B cell (primary cell): ENCODE measurements at regions of chr5 and their contacts with region 1.

Region 1: GRCh38 chr5:103139264-103139865 is 19.3 kb downstream of the PPIP5K2 start:
- DNase-seq: peak; percentile 82
- ATAC-seq: peak; percentile 87
- H3K4me3 ChIP-seq: no peak overlapping the region
- H3K4me3 Mint-ChIP-seq: no peak overlapping the region
- H3K27ac ChIP-seq: no peak overlapping the region
- H3K27ac Mint-ChIP-seq: no peak overlapping the region
- H3K4me1 ChIP-seq: no peaks in the 10 kb centered on the region
- H3K4me1 Mint-ChIP-seq: no peaks in the 10 kb centered on the region
- H3K27me3 ChIP-seq: no peaks in the 10 kb centered on the region
- H3K27me3 Mint-ChIP-seq: no peaks in the 10 kb centered on the region
- CTCF ChIP-seq: peak; percentile 98

Region 2: GRCh38 chr5:102536323-102536928 is 602.9 kb before region 1 on chr5:
- CTCF ChIA-PET with region 1: interaction called, 20 read pairs
- POLR2A ChIA-PET with region 1: no interaction called
- intact Hi-C with region 1: loop called (anchors 1 kb)
- DNase-seq: no peak
- ATAC-seq: no peak
- H3K4me3 ChIP-seq: no peak overlapping the region
- H3K4me3 Mint-ChIP-seq: no peak overlapping the region
- H3K27ac ChIP-seq: no peak overlapping the region
- H3K27ac Mint-ChIP-seq: no peak overlapping the region
- H3K4me1 ChIP-seq: peaks cover 0 to 4% of the 10 kb centered on the region in 2 donors
- H3K4me1 Mint-ChIP-seq: peaks cover 4% of the 10 kb centered on the region
- H3K27me3 ChIP-seq: no peaks in the 10 kb centered on the region
- H3K27me3 Mint-ChIP-seq: peaks cover 4% of the 10 kb centered on the region
- CTCF ChIP-seq: peak; percentile 63

Region 3: DNA sequence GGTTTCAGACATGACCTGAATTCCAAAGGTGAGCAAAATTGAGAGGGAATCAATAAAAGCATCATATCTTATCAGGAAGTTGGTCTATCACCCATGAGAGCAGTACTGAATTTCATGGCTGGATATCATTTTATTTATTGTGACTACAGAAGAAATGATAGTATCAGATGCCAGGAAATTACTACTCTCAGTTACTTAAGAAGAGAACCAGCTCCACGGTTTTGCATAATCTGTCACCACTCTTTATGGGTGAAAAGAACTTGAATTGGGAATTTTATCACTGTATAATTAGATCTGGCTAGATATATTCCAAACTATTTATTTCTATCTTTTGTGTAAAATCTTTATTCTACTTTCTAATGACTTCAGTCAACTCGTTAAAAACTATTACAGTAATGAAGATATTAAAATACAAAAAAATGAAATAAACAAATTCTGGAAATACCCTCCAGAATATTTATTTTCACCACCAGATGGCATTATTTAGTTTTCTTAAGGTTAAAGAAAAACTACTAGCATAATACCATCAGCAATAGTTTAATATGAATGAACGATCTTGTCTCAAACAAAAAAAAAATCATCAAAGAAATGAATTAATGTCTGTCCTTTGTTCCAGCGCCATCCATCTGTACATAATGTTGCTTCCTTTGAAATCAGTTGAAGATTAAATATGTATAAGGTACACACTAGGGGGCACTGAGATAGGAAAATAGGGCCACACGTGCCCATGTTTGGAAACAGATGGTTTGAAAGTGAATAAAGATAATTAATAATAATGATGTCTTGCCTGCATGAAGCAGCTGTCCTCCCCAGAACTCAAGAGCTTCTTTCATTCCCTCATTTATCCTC is 555.9 kb before region 1 on chr5:
- CTCF ChIA-PET with region 1: interaction called, 19 read pairs
- POLR2A ChIA-PET with region 1: no interaction called
- intact Hi-C with region 1: no loop called
- DNase-seq: peak; percentile 18
- ATAC-seq: no peak
- H3K4me3 ChIP-seq: no peak overlapping the region
- H3K4me3 Mint-ChIP-seq: no peak overlapping the region
- H3K27ac ChIP-seq: no peak overlapping the region
- H3K27ac Mint-ChIP-seq: no peak overlapping the region
- H3K4me1 ChIP-seq: no peaks in the 10 kb centered on the region
- H3K4me1 Mint-ChIP-seq: no peaks in the 10 kb centered on the region
- H3K27me3 ChIP-seq: no peaks in the 10 kb centered on the region
- H3K27me3 Mint-ChIP-seq: peaks cover 3% of the 10 kb centered on the region
- CTCF ChIP-seq: peak; percentile 65

Region 4: GRCh38 chr5:102681407-102681983 is 457.9 kb before region 1 on chr5:
- CTCF ChIA-PET with region 1: interaction called, 28 read pairs
- POLR2A ChIA-PET with region 1: no interaction called
- intact Hi-C with region 1: loop called (anchors 1 kb)
- DNase-seq: peak; percentile 28
- ATAC-seq: peak; percentile 47
- H3K4me3 ChIP-seq: no peak overlapping the region
- H3K4me3 Mint-ChIP-seq: no peak overlapping the region
- H3K27ac ChIP-seq: no peak overlapping the region
- H3K27ac Mint-ChIP-seq: no peak overlapping the region
- H3K4me1 ChIP-seq: no peaks in the 10 kb centered on the region
- H3K4me1 Mint-ChIP-seq: no peaks in the 10 kb centered on the region
- H3K27me3 ChIP-seq: peaks cover 0 to 2% (median 0%) of the 10 kb centered on the region in 4 experiments
- H3K27me3 Mint-ChIP-seq: no peaks in the 10 kb centered on the region
- CTCF ChIP-seq: peak; percentile 64

Region 5: DNA sequence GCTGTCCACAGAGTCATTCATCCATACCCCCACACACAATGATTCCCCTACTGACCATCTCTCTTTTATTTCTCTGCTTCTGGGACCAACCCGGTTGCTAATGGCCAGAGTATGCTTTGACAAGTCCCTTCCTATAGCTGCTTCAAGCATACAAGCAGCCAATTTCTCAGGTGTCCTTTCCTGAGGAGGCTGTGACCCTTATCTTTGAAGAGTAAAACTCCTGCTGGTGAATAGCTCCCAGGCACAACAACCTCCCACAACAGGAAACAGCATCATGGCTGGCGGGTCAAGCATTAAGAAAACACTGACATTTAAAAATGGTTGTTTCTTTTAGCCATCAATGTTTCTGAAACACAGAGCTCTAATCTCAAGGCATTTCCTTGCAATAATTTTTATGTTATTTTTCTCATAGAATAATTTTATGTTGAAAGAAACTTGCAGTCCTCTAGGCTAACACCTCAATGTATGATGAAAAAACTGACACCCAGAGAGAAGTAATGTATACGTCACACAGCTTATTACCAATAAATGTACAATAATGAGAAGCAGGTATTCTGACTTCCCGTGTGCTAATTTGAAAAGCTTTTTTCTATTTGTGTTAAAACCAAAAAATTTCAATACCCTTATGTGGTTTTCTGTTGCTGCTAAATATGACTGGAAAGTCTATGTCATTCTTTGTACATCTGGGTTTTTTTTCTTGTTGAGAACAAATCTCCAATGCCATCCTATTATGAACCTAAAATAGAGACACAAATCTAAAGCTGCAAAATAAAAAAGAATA is 391.8 kb before region 1 on chr5:
- CTCF ChIA-PET with region 1: no interaction called
- POLR2A ChIA-PET with region 1: no interaction called
- intact Hi-C with region 1: no loop called
- DNase-seq: no peak
- ATAC-seq: no peak
- H3K4me3 ChIP-seq: no peak overlapping the region
- H3K4me3 Mint-ChIP-seq: no peak overlapping the region
- H3K27ac ChIP-seq: no peak overlapping the region
- H3K27ac Mint-ChIP-seq: no peak overlapping the region
- H3K4me1 ChIP-seq: no peaks in the 10 kb centered on the region
- H3K4me1 Mint-ChIP-seq: peaks cover 3% of the 10 kb centered on the region
- H3K27me3 ChIP-seq: peaks cover 0 to 6% (median 2%) of the 10 kb centered on the region in 4 experiments
- H3K27me3 Mint-ChIP-seq: peaks cover 15% of the 10 kb centered on the region
- CTCF ChIP-seq: no peak

Region 6: GRCh38 chr5:102778478-102778877 is 360.9 kb before region 1 on chr5:
- CTCF ChIA-PET with region 1: interaction called, 37 read pairs
- POLR2A ChIA-PET with region 1: no interaction called
- intact Hi-C with region 1: loop called (anchors 1 kb)
- DNase-seq: no peak
- ATAC-seq: no peak
- H3K4me3 ChIP-seq: no peak overlapping the region
- H3K4me3 Mint-ChIP-seq: no peak overlapping the region
- H3K27ac ChIP-seq: no peak overlapping the region
- H3K27ac Mint-ChIP-seq: no peak overlapping the region
- H3K4me1 ChIP-seq: no peaks in the 10 kb centered on the region
- H3K4me1 Mint-ChIP-seq: peaks cover 3% of the 10 kb centered on the region
- H3K27me3 ChIP-seq: no peaks in the 10 kb centered on the region
- H3K27me3 Mint-ChIP-seq: no peaks in the 10 kb centered on the region
- CTCF ChIP-seq: no peak

Region 7: DNA sequence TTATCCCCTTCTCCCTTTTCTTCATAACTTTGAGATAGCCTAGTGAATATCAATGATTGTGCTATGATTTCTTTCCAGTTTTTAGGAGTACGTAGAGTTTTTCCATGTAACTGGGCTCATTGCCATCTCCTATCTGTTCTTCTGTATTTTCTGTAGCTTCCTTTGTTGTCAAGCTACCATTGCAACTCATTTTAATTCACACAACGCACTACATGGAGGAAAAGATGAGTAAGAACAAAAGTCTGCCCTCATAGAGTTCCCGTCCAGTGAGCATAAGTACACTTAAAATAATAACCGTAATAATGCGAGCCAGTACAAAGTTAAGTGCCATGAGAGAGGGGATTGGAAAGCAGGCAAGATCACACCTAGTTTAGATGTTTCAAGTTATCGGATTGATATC is 206.6 kb before region 1 on chr5:
- CTCF ChIA-PET with region 1: no interaction called
- POLR2A ChIA-PET with region 1: no interaction called
- intact Hi-C with region 1: no loop called
- DNase-seq: no peak
- ATAC-seq: no peak
- H3K4me3 ChIP-seq: no peak overlapping the region
- H3K4me3 Mint-ChIP-seq: no peak overlapping the region
- H3K27ac ChIP-seq: no peak overlapping the region
- H3K27ac Mint-ChIP-seq: no peak overlapping the region
- H3K4me1 ChIP-seq: no peaks in the 10 kb centered on the region
- H3K4me1 Mint-ChIP-seq: no peaks in the 10 kb centered on the region
- H3K27me3 ChIP-seq: no peaks in the 10 kb centered on the region
- H3K27me3 Mint-ChIP-seq: no peaks in the 10 kb centered on the region
- CTCF ChIP-seq: no peak

Region 8: GRCh38 chr5:103119765-103120606 is 19.4 kb before region 1 on chr5 and contains the starts of genes GIN1 and PPIP5K2:
- CTCF ChIA-PET with region 1: interaction called, 15 read pairs
- POLR2A ChIA-PET with region 1: no interaction called
- intact Hi-C with region 1: no loop called
- DNase-seq: peak; percentile 98
- ATAC-seq: peak; percentile 91
- H3K4me3 ChIP-seq: peak within 1 kb of the TSS; percentile 77 to 96 (median 91)
- H3K4me3 Mint-ChIP-seq: peak within 1 kb of the TSS; percentile 93
- H3K27ac ChIP-seq: peak within 1 kb of the TSS; percentile 92 to 96
- H3K27ac Mint-ChIP-seq: peak within 1 kb of the TSS; percentile 98
- H3K4me1 ChIP-seq: peaks cover 13 to 30% of the 10 kb centered on the region in 2 donors
- H3K4me1 Mint-ChIP-seq: peaks cover 49% of the 10 kb centered on the region
- H3K27me3 ChIP-seq: no peaks in the 10 kb centered on the region
- H3K27me3 Mint-ChIP-seq: no peaks in the 10 kb centered on the region
- CTCF ChIP-seq: no peak
- total RNA-seq, gene GIN1: 12.6 and 16.9 TPM in 2 replicates
- total RNA-seq, gene PPIP5K2: 77.9 and 80.5 TPM in 2 replicates

Region 9: GRCh38 chr5:103166706-103167105 is 27.3 kb after region 1 on chr5:
- CTCF ChIA-PET with region 1: interaction called, 10 read pairs
- POLR2A ChIA-PET with region 1: no interaction called
- intact Hi-C with region 1: no loop called
- DNase-seq: no peak
- ATAC-seq: no peak
- H3K4me3 ChIP-seq: no peak overlapping the region
- H3K4me3 Mint-ChIP-seq: no peak overlapping the region
- H3K27ac ChIP-seq: no peak overlapping the region
- H3K27ac Mint-ChIP-seq: no peak overlapping the region
- H3K4me1 ChIP-seq: no peaks in the 10 kb centered on the region
- H3K4me1 Mint-ChIP-seq: peaks cover 2% of the 10 kb centered on the region
- H3K27me3 ChIP-seq: no peaks in the 10 kb centered on the region
- H3K27me3 Mint-ChIP-seq: no peaks in the 10 kb centered on the region
- CTCF ChIP-seq: no peak